Heart left ventricle (tissue), 16 donors: ENCODE measurements at regions of chr17 and their contacts with region 1.

Region 1: GRCh38 chr17:50101346-50102163 is 6.4 kb downstream of the PDK2 start:
- DNase-seq: peak; percentile 60 to 83 (median 66)
- ATAC-seq: peak; percentile 56 to 85 (median 76)
- H3K4me3 ChIP-seq: peak overlapping the region in 4 of 12 donors; percentile 18 to 37 (median 26)
- H3K27ac ChIP-seq: peak overlapping the region; percentile 75 to 97 (median 90)
- H3K4me1 ChIP-seq: peaks cover 0 to 73% (median 38%) of the 10 kb centered on the region in 12 donors
- H3K27me3 ChIP-seq: no peaks in the 10 kb centered on the region
- CTCF ChIP-seq: peak in 1 of 12 donors; percentile 24
- POLR2A ChIP-seq: no peak

Region 2: GRCh38 chr17:50177983-50178834 is 76.7 kb after region 1 on chr17:
- intact Hi-C with region 1: loop called in 1 of 10 experiments (anchors 5 kb)
- DNase-seq: peak; percentile 87 to 92 (median 89)
- ATAC-seq: peak; percentile 83 to 89 (median 87)
- H3K4me3 ChIP-seq: peak overlapping the region in 8 of 12 donors; percentile 10 to 31 (median 14)
- H3K27ac ChIP-seq: peak overlapping the region; percentile 39 to 95 (median 84)
- H3K4me1 ChIP-seq: peaks cover 0 to 56% (median 36%) of the 10 kb centered on the region in 12 donors
- H3K27me3 ChIP-seq: no peaks in the 10 kb centered on the region
- CTCF ChIP-seq: peak; percentile 33 to 72 (median 52)
- POLR2A ChIP-seq: peak in 1 of 2 donors; percentile 39

Region 3: DNA sequence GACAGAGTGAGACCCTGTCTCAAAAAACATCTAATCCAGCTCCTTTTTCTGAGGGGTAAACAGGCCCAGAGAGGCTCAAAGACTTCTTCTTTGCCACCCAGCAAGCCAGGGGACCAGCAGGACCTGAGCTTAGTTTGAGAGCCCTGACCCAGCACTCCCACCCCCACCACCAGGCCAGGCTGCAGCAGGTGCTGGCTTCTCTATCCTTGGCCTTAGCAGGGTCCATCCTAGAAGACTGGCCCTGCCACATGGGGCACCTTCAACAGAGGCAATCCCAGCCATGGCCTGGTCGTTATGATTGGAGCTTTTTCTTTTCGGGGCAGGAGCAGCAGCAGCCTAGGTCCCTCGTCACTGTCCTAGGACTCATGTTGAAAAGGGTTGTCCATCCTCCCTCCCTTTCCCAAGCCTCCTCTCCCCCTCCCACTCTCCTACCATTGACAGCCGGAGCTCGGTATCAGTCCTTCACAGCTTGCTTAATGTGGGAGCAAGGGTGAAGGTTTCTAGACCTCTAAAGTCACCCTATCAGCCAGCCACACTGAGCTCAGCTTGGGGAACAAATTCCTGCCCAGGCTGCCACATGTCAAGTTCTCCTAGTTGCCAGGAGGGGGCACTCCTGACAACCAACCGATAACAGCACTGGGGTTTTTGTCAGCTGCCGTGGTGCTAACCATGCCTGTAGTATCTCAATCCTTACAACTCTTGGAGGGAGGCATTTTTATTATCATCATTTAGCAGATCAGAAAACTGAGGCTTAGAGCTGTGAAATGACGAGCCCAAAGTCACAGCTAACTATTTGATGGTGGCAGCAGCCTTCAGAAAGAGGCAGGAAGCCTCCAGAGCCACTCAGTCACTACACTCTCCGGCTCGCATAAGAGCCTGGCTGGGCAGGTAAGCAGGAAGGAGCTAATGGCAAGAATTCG is 260.3 kb after region 1 on chr17:
- intact Hi-C with region 1: loop called in 1 of 10 experiments (anchors 10 kb)
- DNase-seq: peak in 3 of 5 donors; percentile 46 to 57 (median 57)
- ATAC-seq: peak; percentile 33 to 66 (median 58)
- H3K4me3 ChIP-seq: no peak overlapping the region
- H3K27ac ChIP-seq: peak overlapping the region in 1 of 12 donors; percentile 0
- H3K4me1 ChIP-seq: peaks cover 0 to 46% (median 10%) of the 10 kb centered on the region in 12 donors
- H3K27me3 ChIP-seq: no peaks in the 10 kb centered on the region
- CTCF ChIP-seq: peak; percentile 48 to 79 (median 66)
- POLR2A ChIP-seq: no peak